ENCODE measurements at regions of chr10 and their contacts with region 1.

Region 1: GRCh38 chr10:102225646-102226541 is at the start of gene ELOVL3:
- DNase-seq: peak; percentile 100
- H3K27ac ChIP-seq: peak within 1 kb of the TSS; percentile 16
- CTCF ChIP-seq: no peak

Region 2: DNA sequence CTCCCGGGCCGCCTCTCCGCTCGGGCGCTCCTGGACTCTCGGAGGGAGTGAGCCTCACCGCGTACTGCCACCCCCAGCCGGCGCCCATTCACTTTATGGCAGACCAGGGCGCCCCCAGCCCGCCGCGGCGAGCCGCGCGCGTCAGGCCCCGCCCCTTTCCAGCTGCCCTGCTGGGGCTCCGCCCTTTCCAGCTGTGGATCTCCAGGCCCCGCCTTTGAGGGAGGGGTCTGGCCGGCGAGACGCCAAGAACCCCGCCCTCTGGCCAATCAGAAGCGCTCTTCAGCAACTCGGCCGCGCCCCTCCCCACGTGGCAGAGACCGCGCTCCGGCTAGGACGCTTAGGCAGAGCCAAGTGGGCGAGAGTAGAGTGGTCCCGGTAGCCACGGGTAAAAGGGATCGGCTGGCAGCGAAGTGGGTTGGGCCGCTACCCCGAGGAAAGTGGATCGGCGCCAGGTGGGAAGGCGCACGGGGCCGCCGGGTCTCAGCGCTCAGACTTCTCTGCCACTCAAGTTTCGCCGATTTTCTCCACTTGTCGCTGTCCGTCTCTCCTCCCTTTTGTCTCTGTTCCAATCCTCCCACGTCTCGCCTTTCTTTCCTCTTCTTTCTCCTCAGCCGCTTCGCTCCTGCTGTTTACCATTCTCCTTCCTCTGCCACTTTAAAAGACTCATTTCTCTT is 15.7 kb after region 1 on chr10 and contains the start of gene PITX3:
- CTCF ChIA-PET with region 1: interaction called, 12 read pairs
- POLR2A ChIA-PET with region 1: no interaction called
- DNase-seq: peak; percentile 98
- H3K27ac ChIP-seq: no peak within 1 kb of the TSS
- CTCF ChIP-seq: no peak

Region 3: DNA sequence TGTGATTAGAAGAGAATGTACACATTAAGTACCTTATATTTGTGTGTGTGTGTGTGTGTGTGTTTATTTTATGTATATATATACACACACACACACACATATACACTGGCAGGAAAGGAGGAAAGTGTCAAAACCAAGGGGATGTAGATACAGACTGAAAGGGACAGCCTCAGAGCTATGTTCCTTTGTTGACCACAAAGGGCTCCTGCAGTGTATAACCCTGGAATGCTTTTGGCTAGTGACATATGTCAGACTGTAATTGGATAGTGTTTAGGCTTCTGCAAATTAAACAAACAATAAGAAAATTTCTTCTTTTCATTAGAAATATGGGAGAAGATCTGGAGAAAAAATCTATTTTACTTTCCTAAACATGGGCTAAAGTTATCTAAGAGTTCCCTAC is 35.3 kb after region 1 on chr10:
- CTCF ChIA-PET with region 1: no interaction called
- POLR2A ChIA-PET with region 1: no interaction called
- DNase-seq: no peak
- H3K27ac ChIP-seq: no peak overlapping the region
- CTCF ChIP-seq: no peak

Region 4: DNA sequence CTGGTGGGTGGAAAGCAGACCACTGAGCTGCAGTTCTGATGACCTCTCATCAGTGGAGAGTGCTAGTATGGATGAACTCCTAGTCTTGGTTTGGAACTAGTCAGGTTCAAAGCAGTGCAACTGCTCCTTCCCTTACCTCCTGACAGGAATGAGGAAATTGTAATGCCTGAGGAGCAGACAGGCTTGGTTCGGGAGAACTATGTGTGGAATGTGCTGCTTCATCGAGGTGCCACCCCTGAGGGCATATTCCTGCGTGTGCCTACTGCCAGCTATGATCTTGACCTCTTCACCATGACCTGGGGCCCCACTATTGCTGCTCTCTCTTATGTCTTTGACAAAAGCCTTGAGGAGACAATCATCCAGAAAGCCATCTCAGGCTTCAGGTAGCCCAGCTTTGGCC is 142.2 kb after region 1 on chr10:
- CTCF ChIA-PET with region 1: interaction called, 15 read pairs
- POLR2A ChIA-PET with region 1: no interaction called
- DNase-seq: peak; percentile 57
- H3K27ac ChIP-seq: no peak overlapping the region
- CTCF ChIP-seq: no peak

Region 5: GRCh38 chr10:102394079-102394800 is 168.3 kb after region 1 on chr10:
- CTCF ChIA-PET with region 1: interaction called, 79 read pairs
- POLR2A ChIA-PET with region 1: interaction called, 3 read pairs
- DNase-seq: peak; percentile 97
- H3K27ac ChIP-seq: peak overlapping the region; percentile 85
- CTCF ChIP-seq: peak; percentile 66

Region 6: GRCh38 chr10:102420810-102421644 is 195.1 kb after region 1 on chr10 and contains the start of gene FBXL15:
- CTCF ChIA-PET with region 1: interaction called, 38 read pairs
- POLR2A ChIA-PET with region 1: interaction called, 3 read pairs
- DNase-seq: peak; percentile 98
- H3K27ac ChIP-seq: peak within 1 kb of the TSS; percentile 96
- CTCF ChIP-seq: no peak

Measured in RWPE1 (cell line).